GM12878 (cell line): ENCODE measurements at regions of chr1 and their contacts with region 1.

Region 1: DNA sequence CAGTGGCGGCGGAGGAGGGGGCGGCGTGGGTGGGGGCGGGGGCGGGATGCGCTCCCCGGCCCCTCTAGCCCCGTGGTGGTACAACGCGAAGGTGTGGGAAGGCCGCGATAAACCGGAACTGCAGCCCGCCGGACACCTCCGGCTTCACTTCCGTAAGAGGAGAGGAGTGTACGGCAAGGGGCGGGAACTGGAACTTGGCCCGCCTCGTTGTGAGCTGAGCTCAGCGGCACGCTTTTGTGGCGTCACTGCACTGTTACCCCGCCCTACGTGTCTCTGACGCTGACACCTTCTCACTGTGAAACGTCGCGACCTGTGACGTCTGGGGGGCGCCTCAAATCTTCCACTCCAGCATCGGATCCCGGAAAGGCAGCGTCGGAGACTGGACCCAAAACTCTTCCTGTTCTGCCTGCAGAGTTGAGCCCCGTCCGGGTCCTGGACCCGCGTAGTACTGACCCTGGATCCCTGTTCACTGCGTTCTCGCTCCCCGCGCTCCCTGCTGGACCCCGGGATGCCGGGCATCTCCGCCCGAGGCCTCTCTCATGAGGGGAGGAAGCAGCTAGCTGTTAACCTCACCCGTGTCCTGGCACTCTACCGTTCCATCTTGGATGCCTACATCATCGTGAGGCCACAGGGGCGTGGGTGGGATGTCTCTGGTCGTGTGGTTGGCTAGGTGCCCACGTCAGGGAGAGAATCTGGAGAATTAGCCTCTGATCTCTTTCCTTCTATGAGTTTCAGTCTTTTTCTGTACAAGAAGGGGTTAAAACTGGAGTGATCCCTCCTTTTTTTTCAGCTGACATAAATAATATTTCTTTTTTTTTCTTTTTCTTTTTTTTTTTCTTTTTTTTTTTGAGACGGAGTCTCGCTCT is at the start of gene ISG20L2:
- DNase-seq: peak; percentile 92
- ATAC-seq: peak; percentile 85
- H3K4me3 ChIP-seq: peak within 1 kb of the TSS; percentile 100
- H3K27ac ChIP-seq: peak within 1 kb of the TSS; percentile 91
- H3K4me1 ChIP-seq: peaks cover 9% of the 10 kb centered on the region
- H3K27me3 ChIP-seq: no peaks in the 10 kb centered on the region
- CTCF ChIP-seq: no peak; a peak in 1 of 6 replicates
- EP300 ChIP-seq: peak in 1 of 2 experiments; percentile 14; a peak in 1 of 4 replicates
- POLR2A ChIP-seq: peak; percentile 92
- RAD21 ChIP-seq: no peak
- polyA plus RNA-seq, gene ISG20L2: 16.4 to 26.1 TPM

Region 2: GRCh38 chr1:156625436-156626078 is 103.3 kb before region 1 on chr1:
- CTCF ChIA-PET with region 1: interaction called, 23 read pairs
- POLR2A ChIA-PET with region 1: no interaction called
- RAD21 ChIA-PET with region 1: interaction called, 12 read pairs
- SMC1A ChIA-PET with region 1: interaction called, 10 read pairs
- in situ Hi-C with region 1: no loop called
- intact Hi-C with region 1: loop called (anchors 10 kb)
- DNase-seq: no peak
- ATAC-seq: peak; percentile 78
- H3K4me3 ChIP-seq: no peak overlapping the region
- H3K27ac ChIP-seq: no peak overlapping the region
- H3K4me1 ChIP-seq: no peaks in the 10 kb centered on the region
- H3K27me3 ChIP-seq: peaks cover 10 to 20% of the 10 kb centered on the region in 2 experiments
- CTCF ChIP-seq: peak; percentile 75 to 93 (median 80)
- EP300 ChIP-seq: no peak
- POLR2A ChIP-seq: no peak
- RAD21 ChIP-seq: peak; percentile 64

Region 3: DNA sequence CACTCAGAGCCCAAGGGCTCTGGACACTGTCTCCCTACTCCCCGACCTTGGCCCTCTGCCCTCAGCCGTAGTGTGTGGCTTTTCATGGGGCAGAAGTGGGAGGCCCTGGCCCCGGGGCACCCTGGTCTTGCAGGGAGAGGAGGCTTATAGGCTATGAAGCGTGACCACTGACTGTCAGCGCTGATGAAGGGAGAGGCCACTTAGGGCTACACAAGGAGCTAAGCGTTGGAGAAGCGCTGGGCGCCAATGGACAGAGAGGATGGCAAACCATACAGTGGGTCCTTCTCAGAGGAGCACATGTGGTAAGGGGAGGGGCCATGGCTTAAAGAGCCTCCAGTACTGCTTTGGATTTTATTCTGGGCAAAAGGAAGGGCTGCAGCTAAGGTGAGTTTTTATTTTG is 31.3 kb before region 1 on chr1:
- CTCF ChIA-PET with region 1: interaction called, 14 read pairs
- POLR2A ChIA-PET with region 1: no interaction called
- RAD21 ChIA-PET with region 1: interaction called, 173 read pairs
- SMC1A ChIA-PET with region 1: interaction called, 5 read pairs
- in situ Hi-C with region 1: no loop called
- intact Hi-C with region 1: no loop called
- DNase-seq: no peak
- ATAC-seq: no peak
- H3K4me3 ChIP-seq: no peak overlapping the region
- H3K27ac ChIP-seq: no peak overlapping the region
- H3K4me1 ChIP-seq: no peaks in the 10 kb centered on the region
- H3K27me3 ChIP-seq: peaks cover 3 to 11% of the 10 kb centered on the region in 2 experiments; a peak in 3 of 4 replicates
- CTCF ChIP-seq: no peak
- EP300 ChIP-seq: no peak
- POLR2A ChIP-seq: no peak
- RAD21 ChIP-seq: no peak

Region 4: GRCh38 chr1:156746728-156747631 is 18.1 kb after region 1 on chr1:
- CTCF ChIA-PET with region 1: interaction called, 56 read pairs
- POLR2A ChIA-PET with region 1: interaction called, 75 read pairs
- RAD21 ChIA-PET with region 1: interaction called, 34 read pairs
- SMC1A ChIA-PET with region 1: interaction called, 57 read pairs
- in situ Hi-C with region 1: no loop called
- intact Hi-C with region 1: loop called (anchors 2 kb)
- DNase-seq: no peak
- ATAC-seq: peak; percentile 61
- H3K4me3 ChIP-seq: peak overlapping the region; percentile 99
- H3K27ac ChIP-seq: peak overlapping the region; percentile 99
- H3K4me1 ChIP-seq: peaks cover 15% of the 10 kb centered on the region
- H3K27me3 ChIP-seq: no peaks in the 10 kb centered on the region
- CTCF ChIP-seq: peak in 2 of 3 experiments; percentile 7 to 18; a peak in 2 of 6 replicates
- EP300 ChIP-seq: no peak
- POLR2A ChIP-seq: no peak
- RAD21 ChIP-seq: no peak

Region 5: DNA sequence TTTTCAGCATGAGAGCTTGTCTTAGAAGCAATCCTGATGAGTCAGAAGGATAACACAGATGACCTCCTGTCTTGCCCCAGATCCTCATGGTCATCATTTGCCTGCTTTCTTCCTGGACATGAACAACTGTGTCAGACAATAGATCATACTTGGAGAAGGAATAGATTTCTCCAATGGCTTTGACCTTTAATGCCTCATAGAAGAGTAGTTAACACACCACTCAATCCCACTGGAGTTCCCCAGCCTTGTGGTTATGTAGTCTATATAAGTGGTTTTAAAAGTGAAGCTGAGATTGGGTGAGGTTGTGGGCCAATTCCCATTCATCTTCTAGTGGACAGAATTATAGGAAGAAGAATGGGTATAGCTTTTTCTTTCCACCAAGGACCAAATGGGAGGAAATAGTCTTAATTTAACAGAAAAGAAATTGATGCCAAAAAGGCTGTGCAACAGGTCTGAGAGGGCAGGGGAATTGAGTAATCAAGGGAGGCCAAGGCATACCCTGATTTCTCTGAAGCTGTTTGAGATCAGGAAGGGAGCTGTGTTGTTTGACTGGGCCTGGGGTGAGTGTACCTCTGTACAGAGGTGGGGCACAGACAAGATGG is 52.9 kb after region 1 on chr1:
- CTCF ChIA-PET with region 1: interaction called, 84 read pairs
- POLR2A ChIA-PET with region 1: interaction called, 5 read pairs
- RAD21 ChIA-PET with region 1: interaction called, 13 read pairs
- SMC1A ChIA-PET with region 1: interaction called, 10 read pairs
- in situ Hi-C with region 1: no loop called
- intact Hi-C with region 1: no loop called
- DNase-seq: no peak
- ATAC-seq: no peak
- H3K4me3 ChIP-seq: no peak overlapping the region
- H3K27ac ChIP-seq: no peak overlapping the region
- H3K4me1 ChIP-seq: no peaks in the 10 kb centered on the region
- H3K27me3 ChIP-seq: no peaks in the 10 kb centered on the region
- CTCF ChIP-seq: no peak
- EP300 ChIP-seq: no peak
- POLR2A ChIP-seq: no peak
- RAD21 ChIP-seq: no peak

Region 6: DNA sequence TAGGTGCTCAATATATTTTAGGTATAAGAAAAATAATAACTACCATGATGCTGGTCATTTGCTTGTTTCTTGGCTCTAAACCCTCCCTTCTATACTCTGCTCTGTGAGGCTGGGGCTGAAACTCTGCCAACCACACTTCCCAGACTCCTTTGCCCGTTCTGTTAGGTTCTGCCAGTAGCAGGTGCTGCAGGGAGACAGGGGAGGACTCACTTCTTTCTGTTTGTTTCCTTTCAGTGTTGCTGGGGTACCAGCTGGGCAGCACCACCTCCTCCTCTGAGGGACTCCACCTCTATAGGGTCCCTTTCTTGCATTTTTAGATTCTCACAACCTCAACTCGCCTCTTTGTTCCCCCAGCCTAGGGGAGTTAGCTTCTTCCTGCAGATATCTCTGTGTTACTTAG is 104.8 kb after region 1 on chr1:
- CTCF ChIA-PET with region 1: interaction called, 55 read pairs
- POLR2A ChIA-PET with region 1: interaction called, 8 read pairs
- RAD21 ChIA-PET with region 1: interaction called, 34 read pairs
- SMC1A ChIA-PET with region 1: interaction called, 27 read pairs
- in situ Hi-C with region 1: no loop called
- intact Hi-C with region 1: no loop called
- DNase-seq: no peak
- ATAC-seq: peak; percentile 37
- H3K4me3 ChIP-seq: no peak overlapping the region
- H3K27ac ChIP-seq: no peak overlapping the region
- H3K4me1 ChIP-seq: peaks cover 24% of the 10 kb centered on the region
- H3K27me3 ChIP-seq: no peaks in the 10 kb centered on the region
- CTCF ChIP-seq: no peak
- EP300 ChIP-seq: no peak
- POLR2A ChIP-seq: no peak
- RAD21 ChIP-seq: no peak